ENCODE measurements at regions of chr6 and their contacts with region 1.

Region 1: DNA sequence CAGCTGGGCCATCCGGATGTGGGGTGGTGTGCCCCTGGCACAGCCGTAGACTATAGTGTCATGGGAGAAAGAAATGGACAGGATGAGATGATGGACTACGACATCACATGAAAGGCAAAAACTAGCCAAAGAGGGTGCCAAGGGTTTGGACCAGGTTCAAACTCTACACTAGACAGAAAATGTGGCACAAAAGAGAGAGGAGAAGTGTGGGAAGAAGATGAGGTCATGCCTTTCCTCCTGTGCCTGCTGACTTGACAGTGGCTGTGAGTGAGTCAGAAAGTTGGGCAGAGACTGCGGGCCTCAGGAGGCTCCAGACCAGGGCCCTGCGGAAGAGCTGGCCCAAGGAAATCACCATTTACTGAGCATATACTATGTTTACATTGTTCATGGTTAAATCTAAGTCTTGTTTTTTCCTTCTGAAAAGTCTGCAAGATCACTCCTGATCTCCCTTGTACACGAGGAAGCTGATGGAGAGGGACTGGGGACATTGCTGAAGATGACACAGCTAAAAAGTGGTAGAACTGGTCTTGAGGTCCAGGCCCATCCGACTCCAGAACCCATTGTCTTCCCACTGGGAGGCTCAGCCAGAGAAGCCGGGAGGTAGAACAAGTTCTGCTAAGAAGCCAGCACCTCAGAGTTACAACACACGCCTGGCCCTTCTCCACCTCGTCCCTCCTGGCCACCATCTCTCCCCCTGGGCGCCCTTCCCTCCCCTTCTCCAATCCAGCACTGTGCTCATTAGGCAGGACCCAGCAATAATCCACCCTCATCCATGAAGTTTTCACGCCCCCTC is 35.7 kb downstream of the CNKSR3 start:
- DNase-seq: no peak
- ATAC-seq: no peak
- H3K4me3 ChIP-seq: no peak overlapping the region
- H3K27ac ChIP-seq: no peak overlapping the region
- H3K4me1 ChIP-seq: no peaks in the 10 kb centered on the region
- H3K27me3 ChIP-seq: no peaks in the 10 kb centered on the region; a peak in 1 of 4 replicates
- CTCF ChIP-seq: no peak
- EP300 ChIP-seq: no peak
- POLR2A ChIP-seq: no peak
- RAD21 ChIP-seq: no peak

Region 2: DNA sequence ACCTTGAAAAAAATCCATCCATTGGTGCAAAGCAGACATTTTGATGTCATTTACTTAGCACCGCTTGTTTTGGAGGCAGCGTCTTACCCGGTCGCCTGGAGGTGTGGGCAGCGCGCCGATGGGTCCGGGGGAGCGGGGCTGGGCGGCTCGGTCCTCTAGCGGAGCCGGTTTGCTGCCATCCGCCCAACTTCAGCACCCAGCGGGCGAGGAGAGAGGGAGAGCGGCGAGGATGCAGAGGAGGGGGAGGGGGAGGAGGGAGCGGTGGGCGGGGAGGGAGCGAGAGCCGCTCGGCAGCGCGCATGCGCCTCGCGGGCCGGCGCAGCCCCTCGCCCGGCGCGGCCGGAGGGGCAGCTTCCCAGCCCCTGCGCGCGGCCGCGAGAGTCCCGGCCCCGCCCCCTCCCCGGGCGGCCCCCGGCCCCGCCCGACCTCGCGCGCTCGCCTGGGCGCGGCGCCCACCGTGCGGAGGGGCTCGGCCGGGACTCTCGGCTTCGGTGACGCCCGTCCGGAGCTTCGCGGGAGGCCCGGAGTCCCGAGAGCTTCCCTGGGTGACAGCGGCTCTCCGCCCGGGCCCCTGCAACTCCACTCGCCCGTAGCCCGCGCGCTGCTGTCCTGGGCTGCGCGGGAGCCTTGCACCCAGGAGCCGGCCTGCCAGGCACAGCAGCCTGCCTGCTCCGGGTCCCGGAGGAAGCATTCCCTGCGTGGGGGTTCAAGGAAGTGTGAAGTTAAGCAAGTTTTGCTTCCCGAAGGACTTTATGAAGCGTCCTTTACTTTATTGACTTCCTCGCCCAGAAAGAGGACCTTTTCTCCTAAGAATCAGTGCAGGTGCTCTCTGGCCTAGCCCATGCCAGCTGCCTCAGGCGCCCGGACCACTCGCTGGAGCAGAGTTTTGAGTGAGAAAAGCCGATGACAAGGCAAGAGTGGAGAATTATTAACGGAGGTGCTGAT is 1343.5 kb before region 1 on chr6 and contains the start of gene RGS17:
- CTCF ChIA-PET with region 1: no interaction called
- POLR2A ChIA-PET with region 1: no interaction called
- RAD21 ChIA-PET with region 1: no interaction called
- SMC1A ChIA-PET with region 1: no interaction called
- in situ Hi-C with region 1: no loop called
- intact Hi-C with region 1: loop called (anchors 10 kb)
- DNase-seq: no peak
- ATAC-seq: no peak; the same call in 2 of the 3 replicates
- H3K4me3 ChIP-seq: peak within 1 kb of the TSS; percentile 37; the same call in 1 of the 2 replicates
- H3K27ac ChIP-seq: no peak within 1 kb of the TSS
- H3K4me1 ChIP-seq: no peaks in the 10 kb centered on the region
- H3K27me3 ChIP-seq: peaks cover 3 to 15% of the 10 kb centered on the region in 2 experiments
- CTCF ChIP-seq: no peak
- EP300 ChIP-seq: no peak
- POLR2A ChIP-seq: no peak
- RAD21 ChIP-seq: no peak
- polyA plus RNA-seq, gene RGS17: 0.11 to 0.29 TPM

Region 3: DNA sequence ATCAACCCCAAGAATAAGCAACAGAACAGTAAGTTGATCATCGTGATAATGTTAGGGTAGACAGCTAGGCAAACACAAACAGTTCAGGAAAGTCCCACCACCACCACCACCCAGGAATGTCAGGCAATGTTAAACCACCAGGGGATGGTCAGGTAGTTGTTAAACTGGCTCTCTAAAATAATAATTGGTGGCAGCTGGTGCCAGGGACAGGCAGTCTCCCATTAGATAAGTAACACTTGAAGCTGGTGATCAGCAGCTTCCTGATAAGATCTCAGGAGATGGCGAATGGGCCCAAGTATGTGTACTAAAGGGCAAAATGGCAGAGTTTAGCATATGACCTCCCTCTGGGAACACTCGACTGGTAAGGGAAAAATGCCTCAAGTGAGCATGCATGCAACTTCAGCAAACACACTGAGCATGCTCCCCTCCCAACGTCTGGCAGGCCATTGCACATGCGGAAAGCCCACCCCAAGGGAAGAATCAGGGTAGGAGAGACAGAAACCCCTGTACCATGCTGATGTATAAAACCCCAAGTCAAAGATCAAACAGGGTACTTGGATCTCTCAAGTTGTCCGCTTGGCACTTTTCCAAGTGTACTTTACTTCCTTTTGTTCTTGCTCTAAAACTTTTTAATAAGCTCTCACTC is 184.8 kb before region 1 on chr6:
- CTCF ChIA-PET with region 1: no interaction called
- POLR2A ChIA-PET with region 1: no interaction called
- RAD21 ChIA-PET with region 1: no interaction called
- SMC1A ChIA-PET with region 1: no interaction called
- in situ Hi-C with region 1: no loop called
- intact Hi-C with region 1: no loop called
- DNase-seq: no peak
- ATAC-seq: peak; percentile 31; the same call in 2 of the 3 replicates
- H3K4me3 ChIP-seq: no peak overlapping the region
- H3K27ac ChIP-seq: no peak overlapping the region
- H3K4me1 ChIP-seq: no peaks in the 10 kb centered on the region
- H3K27me3 ChIP-seq: no peaks in the 10 kb centered on the region
- CTCF ChIP-seq: no peak
- EP300 ChIP-seq: no peak
- POLR2A ChIP-seq: no peak
- RAD21 ChIP-seq: no peak

Region 4: GRCh38 chr6:155493694-155494143 is 1018.9 kb after region 1 on chr6:
- CTCF ChIA-PET with region 1: no interaction called
- POLR2A ChIA-PET with region 1: no interaction called
- RAD21 ChIA-PET with region 1: no interaction called
- SMC1A ChIA-PET with region 1: no interaction called
- in situ Hi-C with region 1: no loop called
- intact Hi-C with region 1: no loop called
- DNase-seq: peak; percentile 56
- ATAC-seq: peak; percentile 96
- H3K4me3 ChIP-seq: no peak overlapping the region
- H3K27ac ChIP-seq: no peak overlapping the region
- H3K4me1 ChIP-seq: peaks cover 5% of the 10 kb centered on the region; the same call in 1 of the 2 replicates
- H3K27me3 ChIP-seq: no peaks in the 10 kb centered on the region
- CTCF ChIP-seq: no peak
- EP300 ChIP-seq: peak in 1 of 2 experiments; percentile 52; a peak in 2 of 4 replicates
- POLR2A ChIP-seq: no peak
- RAD21 ChIP-seq: no peak

Measured in GM12878 (cell line).